ENCODE measurements at regions of chr6 and their contacts with region 1.

Region 1: GRCh38 chr6:142459271-142459670 is 157.5 kb downstream of the ADGRG6 start:
- DNase-seq: no peak
- ATAC-seq: no peak
- H3K4me3 ChIP-seq: no peak overlapping the region
- H3K4me3 Mint-ChIP-seq: no peak overlapping the region
- H3K27ac ChIP-seq: no peak overlapping the region
- H3K27ac Mint-ChIP-seq: no peak overlapping the region
- H3K4me1 ChIP-seq: no peaks in the 10 kb centered on the region
- H3K4me1 Mint-ChIP-seq: no peaks in the 10 kb centered on the region
- H3K27me3 ChIP-seq: no peaks in the 10 kb centered on the region
- H3K27me3 Mint-ChIP-seq: no peaks in the 10 kb centered on the region
- CTCF ChIP-seq: no peak

Region 2: DNA sequence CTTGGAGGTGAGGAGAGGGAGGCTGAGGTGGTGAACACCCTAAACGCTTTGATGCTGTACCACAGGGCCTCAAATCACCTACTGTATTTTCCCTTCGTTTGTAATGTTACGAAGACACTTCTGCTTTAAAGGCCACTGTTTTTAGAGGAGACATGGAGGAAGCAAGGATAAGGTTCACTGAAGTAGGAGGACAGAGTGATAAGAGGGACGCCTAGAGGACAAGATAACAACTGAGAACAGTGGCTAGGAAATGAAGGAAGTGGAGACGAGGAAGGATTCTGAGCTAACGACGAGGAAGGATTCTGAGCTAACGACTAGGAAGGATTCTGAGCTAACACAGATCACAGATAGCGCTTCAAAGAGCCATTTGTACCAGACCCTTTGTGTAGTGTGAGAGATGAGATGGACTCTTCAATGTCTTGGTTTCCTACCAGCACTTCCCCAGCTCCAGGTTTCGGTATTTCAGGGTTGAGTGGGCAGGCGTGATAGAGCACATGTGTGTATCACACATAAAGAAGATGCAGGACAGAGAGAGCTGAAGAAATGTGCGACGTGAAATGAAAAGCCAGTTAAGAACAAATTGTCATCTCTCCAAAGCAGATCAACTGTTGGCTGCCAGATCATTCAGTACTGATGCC is 1628.6 kb after region 1 on chr6:
- CTCF ChIA-PET with region 1: no interaction called
- POLR2A ChIA-PET with region 1: no interaction called
- intact Hi-C with region 1: loop called in 1 of 2 experiments (anchors 5 kb)
- DNase-seq: no peak
- ATAC-seq: no peak
- H3K4me3 ChIP-seq: no peak overlapping the region
- H3K4me3 Mint-ChIP-seq: no peak overlapping the region
- H3K27ac ChIP-seq: no peak overlapping the region
- H3K27ac Mint-ChIP-seq: no peak overlapping the region
- H3K4me1 ChIP-seq: no peaks in the 10 kb centered on the region
- H3K4me1 Mint-ChIP-seq: no peaks in the 10 kb centered on the region
- H3K27me3 ChIP-seq: no peaks in the 10 kb centered on the region
- H3K27me3 Mint-ChIP-seq: no peaks in the 10 kb centered on the region
- CTCF ChIP-seq: no peak